ENCODE measurements at regions of chr19 and their contacts with region 1.

Region 1: GRCh38 chr19:48842789-48843162 is 6.5 kb upstream of the HSD17B14 start:
- DNase-seq: no peak
- H3K4me3 ChIP-seq: no peak overlapping the region
- CTCF ChIP-seq: peak; percentile 50

Region 2: DNA sequence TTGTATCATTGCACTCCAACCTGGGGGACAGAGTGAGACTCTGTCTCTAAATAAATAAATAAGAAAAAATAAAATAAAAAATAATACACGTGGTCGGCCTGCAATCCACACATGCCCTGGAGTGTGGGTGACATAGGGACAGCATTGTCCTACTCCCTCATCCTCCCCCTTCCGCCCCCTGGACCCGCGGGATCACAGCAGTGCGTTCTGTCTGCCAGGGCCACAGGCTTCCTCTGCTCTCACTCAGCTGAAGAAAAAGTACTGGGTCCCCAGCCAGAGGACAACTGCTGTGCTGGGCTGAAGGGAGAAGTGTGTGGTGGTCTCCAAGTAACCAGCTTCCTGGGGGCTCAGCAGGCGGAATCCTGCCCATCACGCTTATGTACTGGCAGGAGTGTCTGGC is 38.3 kb before region 1 on chr19:
- CTCF ChIA-PET with region 1: interaction called, 737 read pairs
- POLR2A ChIA-PET with region 1: no interaction called
- DNase-seq: no peak
- H3K4me3 ChIP-seq: no peak overlapping the region
- CTCF ChIP-seq: no peak

Region 3: DNA sequence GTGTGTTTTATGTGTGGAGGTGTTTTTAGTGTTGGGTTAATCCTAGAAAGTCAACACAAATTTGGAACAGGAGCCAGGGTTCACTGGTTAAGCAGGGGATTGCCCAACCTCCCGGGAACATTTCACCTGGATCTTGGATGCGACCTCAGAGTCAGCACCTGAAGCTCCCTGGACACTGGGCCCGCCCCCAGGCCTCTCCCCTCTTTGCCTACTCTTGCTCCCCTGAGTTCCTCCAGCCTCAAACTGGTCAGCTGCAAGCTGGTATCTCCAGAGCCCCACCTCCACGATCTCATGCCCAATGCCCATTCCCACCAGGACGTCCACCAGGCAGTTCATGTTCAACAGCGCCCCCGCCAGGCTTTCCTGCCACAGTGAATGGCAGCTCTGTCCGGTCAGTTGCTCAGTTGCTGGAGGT is 16.2 kb before region 1 on chr19:
- CTCF ChIA-PET with region 1: interaction called, 33 read pairs
- POLR2A ChIA-PET with region 1: no interaction called
- DNase-seq: no peak
- H3K4me3 ChIP-seq: no peak overlapping the region
- CTCF ChIP-seq: no peak

Region 4: DNA sequence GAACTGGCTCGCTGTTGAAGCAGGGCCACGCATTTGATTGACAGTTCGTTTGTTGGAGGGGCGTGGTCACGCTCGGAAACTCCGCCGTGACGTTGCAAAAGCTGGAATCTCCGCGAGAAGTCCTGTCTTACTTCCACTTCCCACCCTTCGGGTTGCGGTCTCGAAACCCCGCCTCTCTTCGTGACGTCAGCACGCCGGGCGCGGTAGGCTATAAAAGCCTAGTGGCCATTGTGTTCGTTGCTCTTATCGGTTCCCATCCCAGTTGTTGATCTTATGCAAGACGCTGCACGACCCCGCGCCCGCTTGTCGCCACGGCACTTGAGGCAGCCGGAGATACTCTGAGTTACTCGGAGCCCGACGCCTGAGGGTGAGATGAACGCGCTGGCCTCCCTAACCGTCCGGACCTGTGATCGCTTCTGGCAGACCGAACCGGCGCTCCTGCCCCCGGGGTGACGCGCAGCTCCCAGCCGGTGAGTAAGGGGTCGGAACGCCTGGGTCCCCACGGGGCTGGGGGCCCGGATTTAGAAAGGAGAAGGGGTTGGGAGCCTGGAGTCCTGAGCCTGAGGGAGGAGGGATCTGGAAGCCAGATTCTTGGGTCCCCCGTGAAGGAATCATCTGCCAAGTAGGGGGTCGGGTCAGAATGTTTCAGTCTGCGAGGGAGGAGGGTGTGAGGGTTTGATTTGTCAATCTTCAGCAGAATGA is 29.6 kb after region 1 on chr19 and contains the start of gene PPP1R15A:
- CTCF ChIA-PET with region 1: interaction called, 21 read pairs
- POLR2A ChIA-PET with region 1: interaction called, 5 read pairs
- DNase-seq: peak; percentile 88
- H3K4me3 ChIP-seq: peak within 1 kb of the TSS; percentile 100
- CTCF ChIP-seq: no peak

Region 5: GRCh38 chr19:49272184-49272583 is 429.4 kb after region 1 on chr19:
- CTCF ChIA-PET with region 1: no interaction called
- POLR2A ChIA-PET with region 1: no interaction called
- DNase-seq: peak; percentile 3
- H3K4me3 ChIP-seq: no peak overlapping the region
- CTCF ChIP-seq: no peak